A549 (cell line): ENCODE measurements at regions of chr5 and their contacts with region 1.

Region 1: DNA sequence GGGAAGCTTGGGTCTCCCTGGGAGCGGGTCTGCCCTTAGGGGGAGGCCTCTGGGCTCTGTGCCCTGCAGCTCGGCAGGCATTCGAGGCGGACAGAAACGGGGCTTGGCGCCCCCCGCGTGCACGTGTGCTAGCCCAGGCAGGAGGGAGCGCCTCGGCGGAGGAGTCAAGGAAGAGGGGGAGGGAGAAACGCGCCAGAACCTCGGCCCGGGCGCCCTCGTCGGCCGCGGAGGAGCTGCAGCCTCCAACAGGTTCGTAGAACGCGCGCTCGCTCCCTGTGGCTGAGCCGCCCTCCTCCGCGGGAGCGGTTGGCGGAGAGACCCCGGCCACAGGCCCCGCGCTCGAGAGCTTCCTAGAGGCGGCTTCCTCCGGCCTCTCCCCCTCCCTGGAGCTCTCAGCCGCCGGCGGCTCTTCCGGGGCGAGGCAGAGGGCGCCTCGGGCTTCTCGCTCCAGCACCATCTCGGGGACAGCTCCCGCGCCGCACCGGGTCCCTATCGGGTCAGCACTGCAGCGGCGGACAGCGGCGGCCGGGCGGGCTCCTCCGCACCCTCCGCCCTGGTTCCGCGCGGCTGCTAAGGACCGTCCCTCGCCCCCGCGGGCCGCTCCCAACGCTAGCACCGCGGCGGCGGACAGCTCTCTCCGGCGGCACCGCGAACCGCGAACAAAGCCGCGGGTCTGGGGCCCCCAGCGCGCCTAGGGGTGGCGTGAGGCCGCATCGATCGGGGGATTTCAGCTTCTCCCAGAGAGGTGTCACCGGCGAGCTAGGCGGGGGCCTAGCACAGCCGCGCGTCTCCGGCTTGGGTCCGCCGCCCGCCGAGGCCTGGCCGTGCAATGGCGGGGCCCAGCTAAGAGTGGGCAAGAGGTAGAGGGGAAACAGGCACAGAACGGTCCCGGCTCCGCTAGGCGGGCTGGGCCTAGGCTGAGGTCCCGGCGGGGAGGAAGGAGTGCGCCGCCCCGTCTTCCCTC is 74.6 kb upstream of the CPLX2 start:
- DNase-seq: peak; percentile 66 to 74
- ATAC-seq: peak; percentile 94 to 97
- H3K4me3 ChIP-seq: peak overlapping the region; percentile 53
- H3K27ac ChIP-seq: peak overlapping the region; percentile 65 to 80
- H3K4me1 ChIP-seq: peaks cover 38% of the 10 kb centered on the region
- CTCF ChIP-seq: no peak; the same call in 2 of the 3 replicates
- EP300 ChIP-seq: no peak
- POLR2A ChIP-seq: no peak
- RAD21 ChIP-seq: peak; percentile 8 to 54; a peak in 4 of 5 replicates

Region 2: GRCh38 chr5:175809531-175810121 is 12.8 kb after region 1 on chr5:
- CTCF ChIA-PET with region 1: interaction called, 32 read pairs
- POLR2A ChIA-PET with region 1: interaction called, 3 read pairs
- DNase-seq: peak; percentile 84 to 89
- ATAC-seq: peak; percentile 77 to 92
- H3K4me3 ChIP-seq: 0 out of 3 replicates have a peak overlapping the region, but pooled peaks have one; percentile 2
- H3K27ac ChIP-seq: peak overlapping the region; percentile 88 to 90
- H3K4me1 ChIP-seq: peaks cover 49% of the 10 kb centered on the region
- CTCF ChIP-seq: no peak
- EP300 ChIP-seq: peak; percentile 51 to 70; a peak in 1 of 5 replicates
- POLR2A ChIP-seq: no peak
- RAD21 ChIP-seq: peak; percentile 35 to 44; a peak in 3 of 5 replicates

Region 3: DNA sequence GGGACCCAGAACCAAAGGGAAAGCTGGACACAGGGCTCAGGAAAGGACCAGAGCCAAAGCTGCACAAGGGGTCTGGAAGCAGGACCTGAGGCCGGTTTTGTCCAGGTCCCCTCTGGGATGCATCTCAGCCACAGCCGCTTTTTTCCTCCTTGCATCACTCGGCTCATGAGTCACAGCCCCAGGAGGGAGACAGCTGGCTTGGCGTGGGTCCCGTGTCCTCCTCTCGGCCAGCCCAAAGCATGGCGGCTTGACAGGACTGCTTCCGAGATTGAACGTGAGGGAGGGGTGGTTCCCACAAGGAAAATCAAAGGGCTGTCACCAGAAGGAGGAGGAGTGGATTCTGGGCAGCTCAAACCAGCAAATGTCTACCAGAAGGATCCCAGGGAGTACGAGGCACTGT is 17.9 kb after region 1 on chr5:
- CTCF ChIA-PET with region 1: interaction called, 32 read pairs
- POLR2A ChIA-PET with region 1: interaction called, 3 read pairs
- DNase-seq: peak; percentile 76 to 94
- ATAC-seq: peak; percentile 72 to 77
- H3K4me3 ChIP-seq: no peak overlapping the region
- H3K27ac ChIP-seq: peak overlapping the region; percentile 88 to 90
- H3K4me1 ChIP-seq: peaks cover 40% of the 10 kb centered on the region
- CTCF ChIP-seq: no peak
- EP300 ChIP-seq: peak in 1 of 2 experiments; percentile 43; a peak in 2 of 5 replicates
- POLR2A ChIP-seq: no peak
- RAD21 ChIP-seq: peak in 1 of 2 experiments; percentile 13; a peak in 1 of 5 replicates

Region 4: DNA sequence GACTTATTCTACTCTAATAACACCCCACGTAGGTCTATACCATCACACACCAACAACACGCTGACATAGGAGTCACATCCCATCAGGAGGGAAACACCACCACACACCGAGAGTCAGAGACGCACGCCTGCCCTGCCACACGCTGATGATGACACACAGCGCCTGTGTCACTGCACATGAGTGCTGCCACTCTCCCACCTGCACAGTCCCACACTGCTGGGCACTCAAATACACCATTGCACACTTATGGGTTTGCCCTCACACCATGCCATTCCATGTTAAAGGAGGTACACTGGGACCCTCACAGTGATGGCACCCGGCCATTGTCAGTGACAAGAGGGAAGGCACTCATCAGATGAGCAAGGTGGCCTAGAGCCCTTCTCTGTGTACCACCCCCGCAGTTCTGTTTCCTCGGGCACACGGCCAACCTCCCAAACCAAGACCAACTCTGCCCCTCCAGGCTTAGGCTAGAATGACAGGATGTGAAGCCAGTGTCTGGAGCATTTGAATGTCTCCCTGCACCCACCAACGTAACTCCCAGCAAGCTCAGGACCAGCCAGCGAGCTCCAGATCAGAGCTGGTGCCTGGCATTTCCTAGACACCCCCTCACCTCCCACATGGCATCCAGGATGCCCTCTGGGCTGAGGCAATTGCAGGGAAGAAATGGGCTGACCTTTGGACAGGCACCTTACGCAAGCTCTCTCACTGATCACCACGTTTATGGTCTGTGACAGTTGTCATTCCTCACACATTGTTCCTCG is 70.9 kb after region 1 on chr5:
- CTCF ChIA-PET with region 1: interaction called, 41 read pairs
- POLR2A ChIA-PET with region 1: interaction called, 4 read pairs
- DNase-seq: peak; percentile 95 to 96
- ATAC-seq: peak; percentile 55 to 64
- H3K4me3 ChIP-seq: peak overlapping the region; percentile 82
- H3K27ac ChIP-seq: peak overlapping the region; percentile 97 to 99
- H3K4me1 ChIP-seq: peaks cover 78% of the 10 kb centered on the region
- CTCF ChIP-seq: peak; percentile 52
- EP300 ChIP-seq: peak; percentile 93; a peak in 4 of 5 replicates
- POLR2A ChIP-seq: no peak
- RAD21 ChIP-seq: peak; percentile 80